RWPE1 (cell line): ENCODE measurements at regions of chr15 and their contacts with region 1.

Region 1: GRCh38 chr15:71780115-71780976 is 30.0 kb upstream of the NR2E3 start:
- DNase-seq: peak; percentile 42
- H3K27ac ChIP-seq: no peak overlapping the region
- CTCF ChIP-seq: peak; percentile 92

Region 2: DNA sequence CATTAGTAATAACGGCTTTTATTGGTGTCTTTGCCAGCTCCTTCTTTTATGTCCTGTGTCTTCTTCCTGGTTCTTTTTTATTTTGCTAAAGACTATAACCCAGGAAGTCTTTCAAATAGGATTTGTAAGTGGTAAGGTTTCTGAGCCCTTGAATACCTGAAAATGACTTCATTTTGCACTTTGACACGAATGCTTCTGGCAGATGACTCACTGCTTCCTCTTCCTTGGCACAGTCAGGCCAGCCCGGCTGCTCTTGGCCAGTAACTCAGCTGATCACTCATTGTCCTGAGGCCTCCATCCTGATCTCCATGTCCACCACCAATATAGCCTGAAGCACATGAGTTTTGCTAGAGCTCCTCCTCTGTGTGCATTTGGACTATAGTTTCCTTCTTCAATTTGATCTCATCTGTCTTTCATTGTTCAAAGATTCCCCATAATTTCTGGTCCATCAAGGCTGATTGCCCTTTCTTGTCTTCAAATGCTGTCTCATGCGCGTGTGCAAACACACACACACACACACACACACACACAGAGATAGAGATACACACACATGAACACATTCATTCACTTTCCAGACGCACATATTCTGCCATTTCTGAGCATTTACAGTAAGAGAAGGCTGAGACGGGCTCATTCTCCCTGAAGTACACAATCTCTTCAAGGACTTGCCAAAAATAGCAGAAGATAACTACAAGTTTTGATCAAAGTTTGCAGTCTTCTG is 18.5 kb before region 1 on chr15:
- CTCF ChIA-PET with region 1: interaction called, 10 read pairs
- POLR2A ChIA-PET with region 1: no interaction called
- DNase-seq: peak; percentile 77
- H3K27ac ChIP-seq: peak overlapping the region; percentile 52; the same call in 1 of the 2 replicates
- CTCF ChIP-seq: no peak

Region 3: DNA sequence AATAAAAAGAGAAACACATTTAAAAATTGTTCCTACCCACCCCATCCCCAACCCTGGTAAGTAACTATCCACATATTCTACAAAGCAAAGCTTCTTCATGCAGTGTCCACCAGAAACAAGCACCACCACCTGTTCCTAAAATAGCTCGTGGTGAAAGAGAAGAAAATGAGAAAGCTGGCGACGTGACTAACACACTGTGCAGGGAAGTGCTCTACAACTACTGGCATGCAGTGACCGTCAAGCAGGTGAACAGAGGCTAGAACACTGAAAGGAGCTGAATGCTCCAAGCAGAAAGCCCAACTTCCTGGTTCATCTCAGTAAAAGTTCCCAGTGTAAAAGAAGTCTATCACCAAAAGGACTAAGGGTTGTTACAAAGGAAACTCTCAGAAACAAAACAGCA is 110.7 kb after region 1 on chr15:
- CTCF ChIA-PET with region 1: no interaction called
- POLR2A ChIA-PET with region 1: no interaction called
- DNase-seq: no peak
- H3K27ac ChIP-seq: no peak overlapping the region
- CTCF ChIP-seq: no peak

Region 4: DNA sequence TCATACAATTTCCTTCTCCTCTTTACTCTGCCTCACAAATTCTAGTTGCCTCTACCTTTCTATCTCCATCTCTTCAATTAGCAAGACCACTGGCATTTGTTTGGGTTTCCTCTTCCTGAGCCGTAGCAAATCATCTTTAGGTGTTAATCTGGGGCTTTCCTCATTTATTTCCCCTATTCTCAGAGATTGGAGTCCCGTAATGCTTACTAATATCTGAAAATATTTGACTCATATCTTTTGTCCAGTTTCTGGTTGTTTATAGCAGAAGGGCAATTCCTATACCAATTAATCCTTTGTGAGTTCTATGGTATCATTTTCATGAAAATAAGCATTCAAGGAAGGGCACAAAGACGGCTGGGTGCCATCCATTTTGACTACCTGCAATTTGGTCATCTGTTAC is 133.7 kb after region 1 on chr15:
- CTCF ChIA-PET with region 1: no interaction called
- POLR2A ChIA-PET with region 1: no interaction called
- DNase-seq: no peak
- H3K27ac ChIP-seq: no peak overlapping the region
- CTCF ChIP-seq: no peak